ENCODE measurements at regions of chr2 and their contacts with region 1.

Region 1: DNA sequence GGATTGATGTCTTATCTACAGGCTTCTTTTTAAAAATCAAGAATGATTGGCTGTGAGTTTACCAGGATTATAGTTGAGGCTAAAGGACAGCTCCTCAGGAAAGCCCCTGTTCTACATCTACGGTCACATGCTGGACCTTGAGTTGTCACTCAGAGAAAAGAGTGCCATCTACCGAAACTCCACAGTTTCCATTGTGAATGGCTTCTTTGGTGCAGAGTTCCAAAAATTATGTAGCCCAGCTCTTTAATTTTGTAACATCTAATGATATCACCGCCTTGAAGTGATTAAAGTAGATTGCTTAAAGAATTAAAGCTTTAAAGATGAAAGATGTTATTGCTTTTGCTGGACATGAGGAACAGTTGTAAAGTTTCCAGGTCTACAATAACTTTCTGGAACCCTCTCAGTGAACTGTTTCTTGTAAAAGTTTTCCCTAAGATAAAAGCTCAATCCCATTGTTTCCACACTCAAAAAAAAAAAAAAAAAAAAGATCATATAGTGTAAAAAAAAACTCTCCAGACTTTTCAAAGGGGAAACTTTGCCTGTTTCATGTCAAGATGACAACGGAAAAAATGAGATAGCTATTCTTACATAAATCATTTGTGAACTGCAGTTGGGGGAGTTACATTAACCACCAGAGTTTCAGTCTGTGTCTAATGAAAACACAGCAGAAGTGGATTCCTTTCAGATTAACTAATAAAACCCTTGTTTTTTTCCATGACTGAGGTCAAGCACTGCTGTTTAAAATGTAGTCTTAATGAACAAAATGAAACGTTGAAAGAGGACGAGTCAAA is 4.3 kb downstream of the COL3A1 start:
- DNase-seq: no peak
- H3K4me3 Mint-ChIP-seq: peak overlapping the region; percentile 53
- H3K27ac Mint-ChIP-seq: peak overlapping the region; percentile 84
- H3K4me1 Mint-ChIP-seq: peaks cover 15% of the 10 kb centered on the region
- H3K27me3 Mint-ChIP-seq: no peaks in the 10 kb centered on the region

Region 2: DNA sequence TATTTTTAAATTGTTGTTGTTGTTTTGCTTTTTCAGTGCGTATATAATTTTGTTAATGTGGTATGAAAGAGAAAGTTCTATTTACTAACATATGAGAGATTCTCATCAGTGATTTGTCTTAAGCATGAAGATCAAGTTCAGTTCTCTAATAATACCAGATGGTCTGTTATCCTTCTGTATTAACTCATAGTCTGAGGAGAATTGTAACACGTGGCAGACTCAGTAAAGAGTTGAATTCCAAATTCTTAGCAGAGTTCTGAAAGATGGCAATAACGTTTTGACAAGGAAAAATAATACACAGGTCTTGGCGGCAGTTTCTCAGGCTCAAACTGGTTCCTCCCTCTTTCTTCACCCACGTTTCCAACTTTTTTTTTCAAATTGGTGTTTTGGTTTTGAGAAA is 21.5 kb before region 1 on chr2:
- intact Hi-C with region 1: loop called (anchors 2 kb)
- DNase-seq: no peak
- H3K4me3 Mint-ChIP-seq: no peak overlapping the region
- H3K27ac Mint-ChIP-seq: no peak overlapping the region
- H3K4me1 Mint-ChIP-seq: peaks cover 6% of the 10 kb centered on the region
- H3K27me3 Mint-ChIP-seq: no peaks in the 10 kb centered on the region

Region 3: DNA sequence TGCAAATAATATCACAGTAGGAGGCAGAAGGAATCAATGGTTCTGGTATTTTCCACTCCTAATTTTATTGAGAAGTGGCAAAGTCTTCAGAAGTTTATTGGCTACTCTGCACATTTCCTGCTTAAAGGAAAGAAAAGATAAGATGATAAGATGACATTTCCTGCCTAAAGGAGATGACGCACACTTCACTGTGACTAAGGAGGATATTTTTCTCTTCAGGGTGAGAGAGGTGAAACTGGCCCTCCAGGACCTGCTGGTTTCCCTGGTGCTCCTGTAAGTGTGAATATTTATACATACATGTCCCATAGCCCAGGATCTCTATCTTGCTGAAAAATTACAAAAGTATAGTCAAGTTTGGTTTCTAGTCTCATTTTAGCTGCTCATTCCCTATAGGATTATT is 23.6 kb after region 1 on chr2:
- intact Hi-C with region 1: loop called (anchors 1 kb)
- DNase-seq: no peak
- H3K4me3 Mint-ChIP-seq: no peak overlapping the region
- H3K27ac Mint-ChIP-seq: no peak overlapping the region
- H3K4me1 Mint-ChIP-seq: peaks cover 9% of the 10 kb centered on the region
- H3K27me3 Mint-ChIP-seq: no peaks in the 10 kb centered on the region